IMR-90 (cell line): ENCODE measurements at regions of chr10 and their contacts with region 1.

Region 1: DNA sequence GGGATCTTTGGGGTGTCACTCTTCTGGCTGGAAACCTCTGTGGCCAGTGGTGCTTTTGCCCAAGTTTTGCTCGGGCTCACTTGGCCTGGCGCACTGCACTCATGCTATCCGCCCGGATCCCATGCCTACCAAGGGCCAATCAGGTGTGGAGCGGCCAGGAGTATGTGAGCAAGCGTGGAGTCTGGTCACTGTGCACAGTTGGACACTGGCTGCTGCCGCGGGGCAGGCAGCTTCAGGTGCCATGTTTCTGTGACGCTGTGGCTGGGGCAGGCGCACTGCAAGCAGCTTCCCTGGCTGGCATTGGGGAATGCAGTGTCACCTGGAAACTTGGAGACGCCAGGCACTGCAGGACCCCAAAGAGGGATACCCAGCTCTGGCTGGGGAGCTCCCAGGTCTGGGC is 45.3 kb downstream of the NEUROG3 start:
- DNase-seq: no peak
- ATAC-seq: no peak
- H3K4me3 ChIP-seq: no peak overlapping the region
- H3K27ac ChIP-seq: no peak overlapping the region
- H3K4me1 ChIP-seq: no peaks in the 10 kb centered on the region
- H3K27me3 ChIP-seq: peaks cover 18% of the 10 kb centered on the region
- CTCF ChIP-seq: no peak
- POLR2A ChIP-seq: no peak
- RAD21 ChIP-seq: no peak

Region 2: DNA sequence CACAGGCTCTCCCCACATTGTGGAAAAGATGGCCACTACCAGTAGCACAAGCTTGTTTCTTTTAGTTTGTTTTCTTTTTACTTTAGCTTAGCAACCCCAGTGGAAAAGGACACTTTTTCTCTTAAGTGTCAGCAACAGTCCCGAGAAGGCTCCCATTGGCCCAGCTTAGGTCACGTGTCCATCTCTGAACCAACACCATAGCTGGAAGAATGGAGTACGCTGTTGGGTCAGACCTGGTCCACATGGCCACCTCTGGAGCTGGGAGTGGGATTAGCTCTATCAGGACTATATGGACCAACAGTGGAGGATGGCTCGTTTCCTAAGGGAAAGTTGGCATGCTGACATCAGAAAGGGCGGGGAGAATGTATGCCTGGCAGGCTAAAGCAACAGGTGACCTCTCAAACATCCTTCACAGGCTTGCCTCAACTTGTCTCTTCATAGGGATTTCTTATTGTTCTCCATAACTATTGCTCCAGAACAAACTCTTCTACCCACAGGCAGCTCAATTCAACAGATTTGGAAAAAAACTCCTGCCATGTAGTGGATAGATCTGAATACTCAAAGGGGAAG is 72.9 kb after region 1 on chr10:
- CTCF ChIA-PET with region 1: no interaction called
- POLR2A ChIA-PET with region 1: no interaction called
- dilution Hi-C with region 1: no loop called
- in situ Hi-C with region 1: no loop called
- intact Hi-C with region 1: loop called (anchors 2 kb)
- DNase-seq: no peak
- ATAC-seq: no peak
- H3K4me3 ChIP-seq: no peak overlapping the region
- H3K27ac ChIP-seq: no peak overlapping the region
- H3K4me1 ChIP-seq: no peaks in the 10 kb centered on the region
- H3K27me3 ChIP-seq: peaks cover 28% of the 10 kb centered on the region
- CTCF ChIP-seq: no peak
- POLR2A ChIP-seq: no peak
- RAD21 ChIP-seq: no peak

Region 3: DNA sequence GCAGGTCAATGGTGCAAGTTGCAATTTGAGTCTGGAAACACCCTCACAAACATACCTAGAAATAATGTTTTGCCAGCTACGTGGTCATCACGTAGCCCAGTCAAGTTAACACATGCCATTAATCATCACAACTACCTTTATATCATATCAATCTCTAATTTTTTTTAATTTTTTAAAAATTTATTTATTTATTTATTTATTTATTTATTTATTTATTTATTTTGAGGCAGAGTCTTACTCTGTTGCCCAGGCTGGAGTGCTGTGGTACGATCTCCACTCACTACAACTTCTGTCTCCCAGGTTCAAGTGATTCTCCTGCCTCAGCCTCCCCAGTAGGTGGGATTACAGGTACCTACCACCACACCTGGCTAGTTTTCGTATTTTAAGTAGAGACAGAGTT is 472.3 kb after region 1 on chr10:
- CTCF ChIA-PET with region 1: no interaction called
- POLR2A ChIA-PET with region 1: no interaction called
- dilution Hi-C with region 1: no loop called
- in situ Hi-C with region 1: no loop called
- intact Hi-C with region 1: no loop called
- DNase-seq: no peak
- ATAC-seq: no peak
- H3K4me3 ChIP-seq: no peak overlapping the region
- H3K27ac ChIP-seq: no peak overlapping the region
- H3K4me1 ChIP-seq: no peaks in the 10 kb centered on the region
- H3K27me3 ChIP-seq: peaks cover 24% of the 10 kb centered on the region
- CTCF ChIP-seq: no peak
- POLR2A ChIP-seq: no peak
- RAD21 ChIP-seq: no peak